Dendritic cell treated with granulocyte-macrophage colony-stimulating factor and Interleukin-4, amounts not matched to agents 40 ng/mL and 50 ng/mL, for 4 days (primary cell): ENCODE measurements at regions of chr7 and their contacts with region 1.

Region 1: GRCh38 chr7:36487756-36488336 is 98.2 kb downstream of the ANLN start:
- H3K4me3 Mint-ChIP-seq: no peak overlapping the region
- H3K27ac Mint-ChIP-seq: no peak overlapping the region
- H3K4me1 Mint-ChIP-seq: no peaks in the 10 kb centered on the region
- H3K27me3 Mint-ChIP-seq: no peaks in the 10 kb centered on the region

Region 2: GRCh38 chr7:35605760-35606159 is 882.1 kb before region 1 on chr7:
- intact Hi-C with region 1: no loop called
- H3K4me3 Mint-ChIP-seq: no peak overlapping the region
- H3K27ac Mint-ChIP-seq: no peak overlapping the region
- H3K4me1 Mint-ChIP-seq: no peaks in the 10 kb centered on the region
- H3K27me3 Mint-ChIP-seq: peaks cover 4% of the 10 kb centered on the region

Region 3: GRCh38 chr7:36207451-36208291 is 280.2 kb before region 1 on chr7:
- intact Hi-C with region 1: no loop called
- H3K4me3 Mint-ChIP-seq: no peak overlapping the region
- H3K27ac Mint-ChIP-seq: peak overlapping the region; percentile 90
- H3K4me1 Mint-ChIP-seq: peaks cover 81% of the 10 kb centered on the region
- H3K27me3 Mint-ChIP-seq: no peaks in the 10 kb centered on the region

Region 4: GRCh38 chr7:36670585-36671431 is 183.0 kb after region 1 on chr7:
- intact Hi-C with region 1: loop called (anchors 1 kb)
- H3K4me3 Mint-ChIP-seq: no peak overlapping the region
- H3K27ac Mint-ChIP-seq: peak overlapping the region; percentile 45
- H3K4me1 Mint-ChIP-seq: peaks cover 18% of the 10 kb centered on the region
- H3K27me3 Mint-ChIP-seq: no peaks in the 10 kb centered on the region

Region 5: GRCh38 chr7:36986429-36987362 is 498.9 kb after region 1 on chr7:
- intact Hi-C with region 1: loop called (anchors 5 kb)
- H3K4me3 Mint-ChIP-seq: no peak overlapping the region
- H3K27ac Mint-ChIP-seq: no peak overlapping the region
- H3K4me1 Mint-ChIP-seq: peaks cover 30% of the 10 kb centered on the region
- H3K27me3 Mint-ChIP-seq: no peaks in the 10 kb centered on the region

Region 6: GRCh38 chr7:37181550-37181932 is 693.7 kb after region 1 on chr7:
- intact Hi-C with region 1: loop called (anchors 1 kb)
- H3K4me3 Mint-ChIP-seq: no peak overlapping the region
- H3K27ac Mint-ChIP-seq: no peak overlapping the region
- H3K4me1 Mint-ChIP-seq: peaks cover 12% of the 10 kb centered on the region
- H3K27me3 Mint-ChIP-seq: no peaks in the 10 kb centered on the region

Region 7: DNA sequence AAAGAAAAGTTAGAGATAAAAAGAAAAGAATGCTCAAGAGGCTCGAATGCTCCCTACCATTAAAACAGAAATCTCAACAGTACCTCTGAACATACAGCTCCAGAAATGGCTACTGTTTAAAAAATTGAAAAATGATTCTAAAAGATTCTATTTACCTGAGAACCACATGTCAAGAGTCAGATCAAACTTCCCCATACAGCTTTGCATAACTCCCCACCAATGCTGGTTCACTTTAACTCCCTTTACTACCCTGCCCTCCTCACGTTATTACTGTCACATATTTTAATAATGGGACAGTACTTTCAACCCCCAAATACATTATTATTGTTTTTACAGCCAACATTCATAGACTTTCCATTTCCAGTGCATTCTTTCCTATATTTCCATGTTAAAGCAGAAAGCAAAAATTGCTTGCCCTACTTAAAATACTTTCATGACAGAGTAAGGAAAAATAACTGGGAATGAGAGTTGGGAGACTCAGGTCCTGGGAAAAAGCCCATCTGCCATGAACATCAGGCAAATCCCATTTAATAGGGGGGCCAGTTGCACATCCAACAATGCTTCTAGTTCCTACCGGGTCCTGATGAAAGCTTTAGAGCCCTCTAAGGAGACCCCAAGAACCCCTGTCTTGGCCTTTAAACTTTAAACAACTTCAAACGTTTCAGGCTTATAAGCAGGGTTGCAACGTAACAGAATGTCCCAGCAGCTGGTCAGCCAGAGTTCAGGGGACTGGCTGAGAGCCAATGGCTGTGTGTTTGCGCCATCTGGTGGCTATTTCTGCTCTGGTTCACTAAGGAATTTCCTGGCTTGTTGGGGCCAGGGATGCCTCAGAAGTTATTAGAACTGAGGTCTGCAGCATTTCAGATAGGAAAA is 713.4 kb after region 1 on chr7:
- intact Hi-C with region 1: loop called (anchors 2 kb)
- H3K4me3 Mint-ChIP-seq: no peak overlapping the region
- H3K27ac Mint-ChIP-seq: no peak overlapping the region
- H3K4me1 Mint-ChIP-seq: no peaks in the 10 kb centered on the region
- H3K27me3 Mint-ChIP-seq: no peaks in the 10 kb centered on the region